Activated B cell treated with CpG ODN at 0.5 μM for 24 hours (primary cell): ENCODE measurements at regions of chr7 and their contacts with region 1.

Region 1: DNA sequence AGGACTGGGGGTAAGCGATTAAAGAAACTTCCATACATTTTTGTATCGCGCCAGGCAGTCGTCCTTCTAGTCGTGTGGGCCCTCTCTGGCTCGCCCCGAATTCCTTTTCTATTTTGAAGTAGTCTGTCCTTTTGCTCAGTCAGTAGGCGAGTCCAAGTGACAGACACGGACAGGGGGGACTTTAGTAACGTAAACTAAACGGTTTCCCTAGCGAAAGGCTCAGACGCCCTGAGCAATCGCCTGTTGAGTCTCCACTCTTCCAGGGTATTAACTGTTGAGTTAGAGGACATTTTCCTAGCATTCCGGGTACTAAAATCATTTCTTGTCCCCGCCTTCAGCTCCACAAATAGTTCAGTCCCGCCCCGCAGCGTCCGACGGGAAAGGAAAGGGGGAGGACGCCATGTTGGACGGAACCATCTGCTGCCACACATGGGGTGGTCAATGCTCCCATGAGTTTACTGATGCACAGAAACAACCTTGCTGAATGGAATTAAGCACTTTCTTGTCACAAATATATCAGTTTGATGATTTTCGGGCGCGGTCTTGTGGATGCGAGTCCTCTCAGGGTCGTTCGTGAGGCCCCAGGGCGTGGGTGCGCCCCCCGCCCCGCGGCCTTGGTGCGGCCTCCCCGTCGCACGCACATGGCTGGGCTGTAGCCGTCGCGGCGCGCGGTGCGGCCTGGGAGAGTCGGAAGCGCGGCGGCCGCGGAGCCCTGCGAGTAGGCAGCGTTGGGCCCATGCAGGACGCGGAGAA is at the start of gene EIF3B:
- DNase-seq: peak; percentile 88
- ATAC-seq: peak; percentile 85
- H3K4me3 Mint-ChIP-seq: peak within 1 kb of the TSS; percentile 94
- H3K27ac Mint-ChIP-seq: peak within 1 kb of the TSS; percentile 100
- H3K4me1 Mint-ChIP-seq: peaks cover 33% of the 10 kb centered on the region
- H3K27me3 Mint-ChIP-seq: no peaks in the 10 kb centered on the region
- CTCF ChIP-seq: no peak
- total RNA-seq, gene EIF3B: 198 and 202 TPM in 2 replicates

Region 2: DNA sequence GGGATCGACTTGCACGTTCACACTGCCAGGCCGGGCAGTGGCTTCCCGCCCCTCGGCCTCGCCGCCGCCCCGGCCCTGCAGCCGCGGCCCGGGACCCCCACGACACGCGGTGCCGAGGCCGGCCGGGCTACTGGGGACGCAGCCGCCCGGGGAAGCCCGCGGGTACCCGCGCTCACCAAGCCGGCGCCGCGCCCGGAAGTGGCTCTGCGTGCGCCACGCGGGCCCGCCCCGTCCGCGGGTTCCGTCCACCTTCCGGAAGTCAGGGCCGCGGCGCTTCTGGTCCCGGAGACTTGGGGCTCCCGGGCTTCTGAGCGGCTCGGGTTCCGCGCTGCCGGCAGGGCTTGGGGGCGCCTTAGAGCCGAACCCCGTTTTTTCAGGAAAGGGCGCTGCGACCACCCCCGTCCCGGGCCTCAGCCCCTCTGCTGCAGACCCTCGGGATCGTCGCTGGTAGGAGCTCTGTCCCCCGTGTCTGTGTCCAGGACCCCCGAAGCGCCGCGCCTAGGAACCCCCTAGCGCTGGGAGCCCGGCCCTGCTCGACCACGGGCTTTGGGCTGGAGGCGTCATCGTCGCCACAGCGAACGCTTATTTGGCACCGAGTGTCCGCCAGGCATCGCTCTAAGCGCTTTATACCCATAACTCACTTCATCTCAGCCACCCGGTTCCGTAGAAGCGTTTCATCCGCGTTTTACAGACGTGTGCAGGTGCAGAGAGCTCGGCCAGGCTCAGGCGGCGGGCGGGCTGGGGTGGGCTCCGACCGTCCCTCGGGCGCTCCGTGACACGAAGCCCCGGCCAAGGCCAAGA is 784.3 kb before region 1 on chr7 and contains the start of gene PSMG3:
- CTCF ChIA-PET with region 1: no interaction called
- POLR2A ChIA-PET with region 1: interaction called, 11 read pairs
- intact Hi-C with region 1: no loop called
- DNase-seq: peak; percentile 91
- ATAC-seq: peak; percentile 90
- H3K4me3 Mint-ChIP-seq: peak within 1 kb of the TSS; percentile 86
- H3K27ac Mint-ChIP-seq: peak within 1 kb of the TSS; percentile 88
- H3K4me1 Mint-ChIP-seq: peaks cover 26% of the 10 kb centered on the region
- H3K27me3 Mint-ChIP-seq: no peaks in the 10 kb centered on the region
- CTCF ChIP-seq: no peak
- total RNA-seq, gene PSMG3: 29.5 and 30.5 TPM in 2 replicates

Region 3: GRCh38 chr7:2203766-2204300 is 150.5 kb before region 1 on chr7:
- CTCF ChIA-PET with region 1: no interaction called
- POLR2A ChIA-PET with region 1: no interaction called
- intact Hi-C with region 1: no loop called
- DNase-seq: no peak
- ATAC-seq: peak; percentile 58
- H3K4me3 Mint-ChIP-seq: no peak overlapping the region
- H3K27ac Mint-ChIP-seq: peak overlapping the region; percentile 19
- H3K4me1 Mint-ChIP-seq: peaks cover 15% of the 10 kb centered on the region
- H3K27me3 Mint-ChIP-seq: no peaks in the 10 kb centered on the region
- CTCF ChIP-seq: no peak

Region 4: DNA sequence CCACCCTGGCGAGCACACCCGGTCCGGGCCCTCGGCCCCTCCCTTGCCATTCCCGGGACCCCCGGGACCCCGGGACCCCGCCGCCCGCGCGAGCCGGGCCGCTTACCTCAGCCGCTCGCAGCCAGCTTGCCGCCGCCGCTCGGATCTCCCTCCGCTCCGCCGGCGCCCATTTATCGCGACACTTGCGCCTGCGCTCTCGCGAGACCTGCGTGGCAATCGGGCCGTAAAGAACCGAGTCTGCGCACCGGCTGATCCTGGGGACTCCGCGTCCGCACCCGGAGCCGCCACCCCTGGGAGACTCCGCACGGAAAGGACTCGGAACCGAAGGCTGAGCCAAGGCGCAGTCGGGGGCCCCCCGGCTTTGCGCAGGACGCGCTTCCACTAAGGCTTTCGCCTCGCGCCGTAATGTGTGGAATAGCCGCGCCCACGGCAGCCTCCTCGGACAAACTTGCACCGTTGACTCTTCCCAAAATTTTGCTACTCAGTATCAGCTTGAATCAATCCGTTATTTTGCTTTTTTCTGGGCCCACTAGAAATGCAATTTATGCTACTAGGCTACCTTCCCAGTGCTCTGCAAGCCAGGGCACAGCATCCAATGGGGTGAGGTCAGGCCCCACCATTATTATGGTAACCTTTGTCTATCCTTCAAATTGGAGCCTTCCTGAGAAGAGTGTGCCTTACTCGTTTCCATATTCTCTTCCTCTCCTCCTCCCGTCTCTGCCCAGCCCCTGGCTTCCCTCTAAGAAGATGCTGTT is 121.4 kb before region 1 on chr7 and contains the start of gene MAD1L1:
- CTCF ChIA-PET with region 1: no interaction called
- POLR2A ChIA-PET with region 1: interaction called, 17 read pairs
- intact Hi-C with region 1: loop called (anchors 2 kb)
- DNase-seq: peak; percentile 88
- ATAC-seq: peak; percentile 68
- H3K4me3 Mint-ChIP-seq: peak within 1 kb of the TSS; percentile 90
- H3K27ac Mint-ChIP-seq: peak within 1 kb of the TSS; percentile 81
- H3K4me1 Mint-ChIP-seq: peaks cover 61% of the 10 kb centered on the region
- H3K27me3 Mint-ChIP-seq: no peaks in the 10 kb centered on the region
- CTCF ChIP-seq: no peak
- total RNA-seq, gene MAD1L1: 54.6 and 65.7 TPM in 2 replicates

Region 5: GRCh38 chr7:2258661-2259365 is 95.5 kb before region 1 on chr7:
- CTCF ChIA-PET with region 1: interaction called, 3 read pairs
- POLR2A ChIA-PET with region 1: interaction called, 19 read pairs
- intact Hi-C with region 1: no loop called
- DNase-seq: peak; percentile 58
- ATAC-seq: peak; percentile 74
- H3K4me3 Mint-ChIP-seq: peak overlapping the region; percentile 55
- H3K27ac Mint-ChIP-seq: peak overlapping the region; percentile 89
- H3K4me1 Mint-ChIP-seq: peaks cover 54% of the 10 kb centered on the region
- H3K27me3 Mint-ChIP-seq: no peaks in the 10 kb centered on the region
- CTCF ChIP-seq: no peak

Region 6: GRCh38 chr7:2403014-2403717 is 48.8 kb after region 1 on chr7 and contains the start of gene CHST12:
- CTCF ChIA-PET with region 1: no interaction called
- POLR2A ChIA-PET with region 1: interaction called, 6 read pairs
- intact Hi-C with region 1: loop called (anchors 1 kb)
- DNase-seq: peak; percentile 91
- ATAC-seq: peak; percentile 77
- H3K4me3 Mint-ChIP-seq: peak within 1 kb of the TSS; percentile 85
- H3K27ac Mint-ChIP-seq: peak within 1 kb of the TSS; percentile 93
- H3K4me1 Mint-ChIP-seq: peaks cover 47% of the 10 kb centered on the region
- H3K27me3 Mint-ChIP-seq: no peaks in the 10 kb centered on the region
- CTCF ChIP-seq: no peak
- total RNA-seq, gene CHST12: 10.3 and 14.4 TPM in 2 replicates

Region 7: GRCh38 chr7:2555121-2556052 is 201.0 kb after region 1 on chr7 and contains the start of gene BRAT1:
- CTCF ChIA-PET with region 1: no interaction called
- POLR2A ChIA-PET with region 1: no interaction called
- intact Hi-C with region 1: loop called (anchors 5 kb)
- DNase-seq: peak; percentile 89
- ATAC-seq: peak; percentile 86
- H3K4me3 Mint-ChIP-seq: peak within 1 kb of the TSS; percentile 87
- H3K27ac Mint-ChIP-seq: peak within 1 kb of the TSS; percentile 92
- H3K4me1 Mint-ChIP-seq: peaks cover 45% of the 10 kb centered on the region
- H3K27me3 Mint-ChIP-seq: no peaks in the 10 kb centered on the region
- CTCF ChIP-seq: no peak
- total RNA-seq, gene BRAT1: 29.6 and 31.7 TPM in 2 replicates